ENCODE measurements at regions of chr6 and their contacts with region 1.

Region 1: GRCh38 chr6:156686995-156687788 is 90.0 kb upstream of the ARID1B start:
- DNase-seq: peak in 8 of 9 donors; percentile 77 to 91 (median 87)
- ATAC-seq: peak; percentile 93
- H3K4me3 ChIP-seq: peak overlapping the region; percentile 89
- H3K4me3 Mint-ChIP-seq: peak overlapping the region; percentile 81 to 96 (median 90)
- H3K27ac ChIP-seq: peak overlapping the region; percentile 100
- H3K27ac Mint-ChIP-seq: peak overlapping the region; percentile 87 to 99 (median 95)
- H3K4me1 ChIP-seq: peaks cover 4 to 17% of the 10 kb centered on the region in 2 donors
- H3K4me1 Mint-ChIP-seq: peaks cover 10 to 28% (median 20%) of the 10 kb centered on the region in 7 donors
- H3K27me3 ChIP-seq: no peaks in the 10 kb centered on the region
- H3K27me3 Mint-ChIP-seq: peaks cover 0 to 27% (median 0%) of the 10 kb centered on the region in 5 donors

Region 2: GRCh38 chr6:154733012-154733625 is 1954.1 kb before region 1 on chr6 and contains the start of gene SCAF8:
- CTCF ChIA-PET with region 1: no interaction called
- POLR2A ChIA-PET with region 1: no interaction called
- intact Hi-C with region 1: loop called in 1 of 2 experiments (anchors 2 kb)
- DNase-seq: peak; percentile 72 to 96 (median 90)
- ATAC-seq: peak; percentile 88
- H3K4me3 ChIP-seq: peak within 1 kb of the TSS; percentile 81
- H3K4me3 Mint-ChIP-seq: peak within 1 kb of the TSS; percentile 89 to 98 (median 92)
- H3K27ac ChIP-seq: peak within 1 kb of the TSS; percentile 93
- H3K27ac Mint-ChIP-seq: peak within 1 kb of the TSS; percentile 85 to 99 (median 93)
- H3K4me1 ChIP-seq: peaks cover 26 to 36% of the 10 kb centered on the region in 2 donors
- H3K4me1 Mint-ChIP-seq: peaks cover 20 to 49% (median 44%) of the 10 kb centered on the region in 7 donors
- H3K27me3 ChIP-seq: no peaks in the 10 kb centered on the region
- H3K27me3 Mint-ChIP-seq: no peaks in the 10 kb centered on the region
- total RNA-seq, gene SCAF8: 41.1 to 69.2 (median 54.9) TPM

Region 3: GRCh38 chr6:155418017-155418761 is 1269.0 kb before region 1 on chr6:
- CTCF ChIA-PET with region 1: no interaction called
- POLR2A ChIA-PET with region 1: no interaction called
- intact Hi-C with region 1: loop called in 1 of 2 experiments (anchors 2 kb)
- DNase-seq: peak; percentile 9 to 87 (median 68)
- ATAC-seq: peak; percentile 89
- H3K4me3 ChIP-seq: peak overlapping the region; percentile 44
- H3K4me3 Mint-ChIP-seq: peak overlapping the region; percentile 77 to 89 (median 84)
- H3K27ac ChIP-seq: peak overlapping the region; percentile 84
- H3K27ac Mint-ChIP-seq: peak overlapping the region; percentile 93 to 99 (median 97)
- H3K4me1 ChIP-seq: peaks cover 6 to 15% of the 10 kb centered on the region in 2 donors
- H3K4me1 Mint-ChIP-seq: peaks cover 22 to 50% (median 38%) of the 10 kb centered on the region in 7 donors
- H3K27me3 ChIP-seq: no peaks in the 10 kb centered on the region
- H3K27me3 Mint-ChIP-seq: no peaks in the 10 kb centered on the region

Region 4: GRCh38 chr6:155561257-155561965 is 1125.8 kb before region 1 on chr6:
- CTCF ChIA-PET with region 1: no interaction called
- POLR2A ChIA-PET with region 1: no interaction called
- intact Hi-C with region 1: no loop called
- DNase-seq: no peak
- ATAC-seq: no peak
- H3K4me3 ChIP-seq: no peak overlapping the region
- H3K4me3 Mint-ChIP-seq: no peak overlapping the region
- H3K27ac ChIP-seq: no peak overlapping the region
- H3K27ac Mint-ChIP-seq: no peak overlapping the region
- H3K4me1 ChIP-seq: no peaks in the 10 kb centered on the region
- H3K4me1 Mint-ChIP-seq: peaks cover 0 to 2% (median 0%) of the 10 kb centered on the region in 7 donors
- H3K27me3 ChIP-seq: no peaks in the 10 kb centered on the region
- H3K27me3 Mint-ChIP-seq: peaks cover 0 to 26% (median 8%) of the 10 kb centered on the region in 5 donors

Region 5: GRCh38 chr6:156564127-156564806 is 122.9 kb before region 1 on chr6:
- CTCF ChIA-PET with region 1: interaction called, 4 read pairs
- POLR2A ChIA-PET with region 1: no interaction called
- intact Hi-C with region 1: loop called (anchors 1 kb)
- DNase-seq: peak; percentile 54 to 76 (median 65)
- ATAC-seq: peak; percentile 95
- H3K4me3 ChIP-seq: no peak overlapping the region
- H3K4me3 Mint-ChIP-seq: peak overlapping the region in 1 of 10 donors; percentile 34
- H3K27ac ChIP-seq: no peak overlapping the region
- H3K27ac Mint-ChIP-seq: peak overlapping the region in 4 of 9 donors; percentile 21 to 49 (median 32)
- H3K4me1 ChIP-seq: peaks cover 0 to 3% of the 10 kb centered on the region in 2 donors
- H3K4me1 Mint-ChIP-seq: peaks cover 5 to 13% (median 7%) of the 10 kb centered on the region in 7 donors
- H3K27me3 ChIP-seq: no peaks in the 10 kb centered on the region
- H3K27me3 Mint-ChIP-seq: peaks cover 0 to 11% (median 8%) of the 10 kb centered on the region in 5 donors

Region 6: GRCh38 chr6:156731396-156731795 is 44.2 kb after region 1 on chr6:
- CTCF ChIA-PET with region 1: no interaction called
- POLR2A ChIA-PET with region 1: no interaction called
- intact Hi-C with region 1: no loop called
- DNase-seq: no peak
- ATAC-seq: no peak
- H3K4me3 ChIP-seq: no peak overlapping the region
- H3K4me3 Mint-ChIP-seq: no peak overlapping the region
- H3K27ac ChIP-seq: no peak overlapping the region
- H3K27ac Mint-ChIP-seq: no peak overlapping the region
- H3K4me1 ChIP-seq: no peaks in the 10 kb centered on the region
- H3K4me1 Mint-ChIP-seq: no peaks in the 10 kb centered on the region
- H3K27me3 ChIP-seq: no peaks in the 10 kb centered on the region
- H3K27me3 Mint-ChIP-seq: peaks cover 0 to 17% (median 0%) of the 10 kb centered on the region in 5 donors

Region 7: DNA sequence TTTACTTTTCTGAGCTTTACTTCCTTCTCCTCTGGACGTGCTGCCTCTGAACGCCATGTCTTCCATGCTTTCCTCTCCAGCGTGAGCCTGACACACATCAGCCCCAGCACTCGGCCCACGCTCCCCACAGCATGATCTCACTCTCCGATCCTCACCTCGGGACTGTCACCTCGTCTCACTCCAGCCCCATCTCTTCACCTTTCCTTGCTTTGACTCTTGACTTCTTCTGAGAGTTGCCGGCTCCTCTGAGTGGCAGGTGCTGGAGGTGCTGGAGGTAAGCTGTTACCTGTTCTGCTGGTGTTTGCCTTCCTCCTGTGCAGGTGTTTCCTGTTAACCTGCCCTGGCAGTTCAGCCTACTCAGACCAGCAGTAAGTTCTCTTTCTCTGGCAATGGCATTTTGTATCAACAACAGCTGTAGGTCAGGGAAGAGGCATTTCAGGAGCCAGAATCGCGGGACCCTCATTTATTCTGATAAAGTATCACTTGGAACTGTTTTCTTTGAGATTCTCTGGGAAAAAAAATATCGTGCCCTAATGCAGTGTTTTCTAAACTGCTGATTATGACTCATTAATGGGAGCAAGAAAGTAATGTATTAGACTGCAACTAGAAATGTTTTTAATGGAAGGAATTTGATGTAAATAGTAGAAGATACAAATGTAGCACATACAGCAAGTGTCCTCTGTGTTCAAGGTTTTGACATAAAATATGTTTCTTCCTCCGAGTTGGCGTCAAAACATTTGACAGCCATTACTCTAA is 196.5 kb after region 1 on chr6:
- CTCF ChIA-PET with region 1: no interaction called
- POLR2A ChIA-PET with region 1: no interaction called
- intact Hi-C with region 1: loop called in 1 of 2 experiments (anchors 5 kb)
- DNase-seq: peak in 5 of 9 donors; percentile 19 to 28 (median 22)
- ATAC-seq: peak; percentile 44
- H3K4me3 ChIP-seq: no peak overlapping the region
- H3K4me3 Mint-ChIP-seq: peak overlapping the region in 9 of 10 donors; percentile 25 to 73 (median 65)
- H3K27ac ChIP-seq: no peak overlapping the region
- H3K27ac Mint-ChIP-seq: peak overlapping the region in 8 of 9 donors; percentile 2 to 59 (median 26)
- H3K4me1 ChIP-seq: peaks cover 14 to 34% of the 10 kb centered on the region in 2 donors
- H3K4me1 Mint-ChIP-seq: peaks cover 27 to 98% (median 91%) of the 10 kb centered on the region in 7 donors
- H3K27me3 ChIP-seq: no peaks in the 10 kb centered on the region
- H3K27me3 Mint-ChIP-seq: no peaks in the 10 kb centered on the region

Region 8: GRCh38 chr6:157323255-157323965 is 636.2 kb after region 1 on chr6 and contains the start of gene TMEM242:
- CTCF ChIA-PET with region 1: no interaction called
- POLR2A ChIA-PET with region 1: no interaction called
- intact Hi-C with region 1: loop called in 1 of 2 experiments (anchors 1 kb)
- DNase-seq: peak; percentile 68 to 93 (median 81)
- ATAC-seq: peak; percentile 98
- H3K4me3 ChIP-seq: peak within 1 kb of the TSS; percentile 95
- H3K4me3 Mint-ChIP-seq: peak within 1 kb of the TSS; percentile 93 to 99 (median 95)
- H3K27ac ChIP-seq: peak within 1 kb of the TSS; percentile 76
- H3K27ac Mint-ChIP-seq: peak within 1 kb of the TSS; percentile 78 to 93 (median 92)
- H3K4me1 ChIP-seq: peaks cover 8 to 12% of the 10 kb centered on the region in 2 donors
- H3K4me1 Mint-ChIP-seq: peaks cover 10 to 47% (median 24%) of the 10 kb centered on the region in 7 donors
- H3K27me3 ChIP-seq: no peaks in the 10 kb centered on the region
- H3K27me3 Mint-ChIP-seq: peaks cover 0 to 30% (median 10%) of the 10 kb centered on the region in 5 donors
- total RNA-seq, gene TMEM242: 11.6 to 15.6 (median 13.2) TPM

Measured in naive thymus-derived CD4-positive, alpha-beta T cell (primary cell).